Right cardiac atrium (tissue), 5 donors: ENCODE measurements at regions of chr13 and their contacts with region 1.

Region 1: GRCh38 chr13:31846182-31846950 is 107.0 kb downstream of the RXFP2 start:
- DNase-seq: peak; percentile 94 to 98 (median 97)
- ATAC-seq: peak; percentile 99
- H3K4me3 ChIP-seq: peak overlapping the region; percentile 84
- H3K27ac ChIP-seq: peak overlapping the region; percentile 74
- H3K4me1 ChIP-seq: no peaks in the 10 kb centered on the region
- H3K27me3 ChIP-seq: no peaks in the 10 kb centered on the region

Region 2: DNA sequence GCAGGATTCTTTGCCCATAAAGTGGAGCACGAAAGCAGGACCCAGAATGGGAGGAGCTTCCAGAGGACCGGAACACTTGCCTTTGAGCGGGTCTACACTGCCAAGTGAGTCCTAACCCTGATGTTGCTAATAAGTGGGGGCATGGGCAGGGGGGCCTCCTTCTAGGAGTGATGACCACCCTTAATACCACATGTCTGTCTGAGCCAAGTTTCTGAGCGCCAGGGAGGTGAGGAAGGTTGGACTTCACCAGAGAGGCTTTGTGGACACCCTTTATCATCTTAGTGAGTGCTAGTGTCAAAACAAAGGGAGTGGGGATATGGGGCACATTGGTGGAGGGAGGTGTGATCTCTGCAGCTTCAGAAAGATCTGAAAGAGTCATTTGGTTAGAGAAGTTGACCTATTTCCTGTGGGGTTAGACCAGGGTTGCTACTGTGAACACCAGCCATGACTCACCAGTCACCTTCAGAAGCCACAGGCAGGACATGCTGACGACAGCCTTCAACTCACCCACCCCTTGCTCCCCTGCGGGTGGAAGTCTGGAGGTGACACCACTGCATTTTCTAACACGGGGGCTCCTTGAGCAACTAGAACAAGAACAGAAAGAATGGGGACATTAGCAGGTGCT is 1102.2 kb before region 1 on chr13:
- intact Hi-C with region 1: no loop called
- DNase-seq: peak in 1 of 3 donors; percentile 56
- ATAC-seq: peak in 1 of 2 donors; percentile 49
- H3K4me3 ChIP-seq: no peak overlapping the region
- H3K27ac ChIP-seq: peak overlapping the region; percentile 5
- H3K4me1 ChIP-seq: peaks cover 8% of the 10 kb centered on the region
- H3K27me3 ChIP-seq: no peaks in the 10 kb centered on the region

Region 3: GRCh38 chr13:31885994-31886393 is 39.6 kb after region 1 on chr13:
- intact Hi-C with region 1: no loop called
- DNase-seq: no peak
- ATAC-seq: peak; percentile 65 to 73
- H3K4me3 ChIP-seq: no peak overlapping the region
- H3K27ac ChIP-seq: peak overlapping the region; percentile 21
- H3K4me1 ChIP-seq: peaks cover 11% of the 10 kb centered on the region
- H3K27me3 ChIP-seq: no peaks in the 10 kb centered on the region

Region 4: DNA sequence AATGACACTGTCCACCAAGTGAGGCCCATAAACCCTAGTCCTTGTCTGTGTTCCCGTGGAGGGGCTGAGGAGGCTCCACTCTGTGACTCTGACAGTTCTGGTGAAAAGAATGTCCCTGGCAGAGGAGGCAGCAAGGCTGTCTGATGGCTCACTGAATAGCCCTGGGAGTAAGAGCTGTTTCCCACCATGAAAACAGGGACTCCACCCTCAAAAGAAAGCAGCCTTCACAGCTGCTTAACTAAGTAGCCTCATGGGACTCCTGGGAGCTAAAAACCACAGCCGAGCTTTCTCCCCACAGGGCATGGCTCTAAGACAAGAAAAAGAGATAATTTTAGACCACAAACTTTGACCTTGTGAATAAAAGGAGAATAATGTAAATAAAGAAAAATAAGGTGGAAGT is 50.1 kb after region 1 on chr13:
- intact Hi-C with region 1: loop called in 1 of 4 experiments (anchors 5 kb)
- DNase-seq: peak in 2 of 3 donors; percentile 18 to 62
- ATAC-seq: peak; percentile 86 to 91
- H3K4me3 ChIP-seq: no peak overlapping the region
- H3K27ac ChIP-seq: peak overlapping the region; percentile 97
- H3K4me1 ChIP-seq: peaks cover 7% of the 10 kb centered on the region
- H3K27me3 ChIP-seq: no peaks in the 10 kb centered on the region

Region 5: DNA sequence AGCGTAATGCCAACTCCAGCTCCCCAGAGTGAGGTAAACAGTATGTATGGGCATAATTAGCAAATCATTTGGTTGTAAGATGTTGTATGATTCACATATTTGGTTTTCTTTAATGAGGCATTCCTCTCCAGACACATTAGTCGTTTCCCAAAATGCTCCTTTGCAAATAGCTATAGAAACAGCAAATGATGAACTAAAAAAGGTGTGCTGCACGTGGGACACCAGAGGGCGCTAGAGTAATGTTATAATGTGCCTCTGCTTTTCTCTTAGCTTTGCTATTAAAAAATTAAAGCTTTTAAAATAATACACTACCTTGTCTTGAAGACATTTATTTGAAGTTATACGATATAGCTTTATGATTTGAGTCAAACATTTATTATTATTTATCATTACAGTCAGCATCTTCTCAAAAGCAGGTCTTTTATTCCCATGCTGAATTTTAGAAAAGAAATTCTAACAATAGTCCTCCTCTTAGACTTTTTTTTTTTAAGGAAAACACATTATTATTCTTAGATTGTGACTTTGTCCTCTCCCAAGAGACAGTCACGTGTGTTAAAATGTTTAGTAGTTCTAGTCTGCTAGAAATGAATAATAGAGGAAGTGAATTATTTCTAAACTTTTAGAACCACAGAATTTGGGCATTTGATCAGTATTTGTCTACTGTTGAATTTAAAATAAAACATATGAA is 63.6 kb after region 1 on chr13:
- intact Hi-C with region 1: no loop called
- DNase-seq: peak in 1 of 3 donors; percentile 25
- ATAC-seq: peak; percentile 27 to 64
- H3K4me3 ChIP-seq: no peak overlapping the region
- H3K27ac ChIP-seq: no peak overlapping the region
- H3K4me1 ChIP-seq: peaks cover 2% of the 10 kb centered on the region
- H3K27me3 ChIP-seq: no peaks in the 10 kb centered on the region